ENCODE measurements at regions of chr3 and their contacts with region 1.

Region 1: GRCh38 chr3:177359593-177360357 is 162.5 kb upstream of the TBL1XR1 start:
- DNase-seq: peak; percentile 99

Region 2: GRCh38 chr3:176663837-176664831 is 695.6 kb before region 1 on chr3:
- intact Hi-C with region 1: no loop called
- DNase-seq: no peak

Region 3: DNA sequence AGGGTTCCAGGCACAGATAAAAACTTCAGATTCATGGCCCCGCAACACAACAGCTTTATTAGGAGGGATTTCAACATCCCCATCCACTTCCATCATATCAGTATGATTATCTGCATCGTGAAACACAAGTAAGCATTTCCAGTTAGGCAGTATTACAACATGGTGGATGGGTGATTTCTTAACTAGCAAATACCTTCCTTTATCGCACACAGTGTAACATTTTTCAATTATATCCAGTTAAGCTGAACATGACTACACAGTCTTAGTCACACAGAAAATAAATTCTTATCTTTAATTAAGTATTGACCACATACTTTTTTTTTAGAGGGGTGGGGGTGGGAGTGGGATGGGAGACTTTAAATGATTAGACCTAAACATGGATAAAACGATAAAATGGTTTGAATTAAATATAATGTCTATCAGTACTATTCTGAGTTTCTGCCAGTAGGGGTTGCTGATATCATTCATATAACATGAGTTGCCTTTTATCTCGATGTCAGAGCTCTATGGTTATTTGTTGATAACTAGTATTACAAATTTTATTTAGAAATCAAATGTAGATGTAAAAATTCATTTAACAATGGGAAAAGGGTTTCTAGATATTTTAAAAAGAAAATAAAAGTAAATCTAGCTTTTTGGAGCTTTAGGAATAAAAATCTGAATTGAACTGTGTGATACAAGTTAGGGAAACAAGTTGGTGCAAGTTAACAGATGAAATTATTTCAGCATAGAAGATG is 309.1 kb before region 1 on chr3:
- intact Hi-C with region 1: loop called in 1 of 2 experiments (anchors 10 kb)
- DNase-seq: no peak

Region 4: GRCh38 chr3:177197041-177197727 is 162.6 kb before region 1 on chr3 and contains the start of gene TBL1XR1:
- intact Hi-C with region 1: loop called (anchors 2 to 5 kb)
- DNase-seq: peak; percentile 97
- total RNA-seq, gene TBL1XR1: 126 to 146 TPM

Region 5: DNA sequence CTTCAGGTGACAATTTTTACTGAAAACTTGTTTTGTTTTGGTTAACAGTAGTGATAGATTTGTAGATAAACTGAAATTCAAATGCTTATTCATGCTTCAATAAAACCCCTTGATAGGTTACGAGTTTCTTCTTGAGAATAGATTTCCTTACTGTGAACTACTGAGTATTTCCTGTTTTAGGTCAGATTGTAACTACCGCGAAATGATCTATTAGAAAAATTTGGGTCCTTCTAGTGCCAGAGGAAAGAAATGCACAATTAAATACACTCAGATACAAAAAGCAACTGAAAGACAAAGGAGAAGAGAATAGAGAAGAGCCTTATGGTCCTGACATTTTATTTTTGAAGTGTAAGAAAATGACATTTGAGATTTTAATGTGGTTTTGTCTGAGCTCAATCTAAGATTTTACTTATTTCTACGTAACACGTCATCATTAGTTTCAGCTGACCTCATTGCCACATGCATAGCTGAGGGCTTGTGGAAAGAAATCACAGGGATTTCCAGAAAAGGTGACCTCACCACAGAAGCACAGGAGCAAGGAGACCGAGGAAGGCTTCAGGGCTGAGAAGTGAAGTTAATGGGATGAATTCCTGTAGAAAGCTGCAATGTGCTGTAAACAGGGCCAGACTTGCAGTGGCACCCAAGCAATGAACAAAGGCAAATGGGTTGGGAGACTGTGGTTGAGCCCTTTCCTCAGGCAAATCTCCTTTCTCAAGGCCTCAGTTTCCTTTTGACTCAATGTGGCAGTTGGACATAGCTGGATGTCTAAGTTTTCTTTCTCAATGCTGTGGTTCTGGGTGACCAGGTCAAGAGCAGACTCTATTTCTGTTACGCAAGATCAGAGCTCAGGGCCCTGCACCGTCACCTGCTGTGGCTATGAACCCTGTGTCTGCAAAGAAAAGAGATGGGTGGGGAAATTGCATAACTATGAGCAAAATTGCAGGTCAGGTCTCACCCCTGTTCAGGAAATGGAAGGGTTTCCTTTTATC is 89.5 kb after region 1 on chr3:
- intact Hi-C with region 1: loop called in 1 of 2 experiments (anchors 10 kb)
- DNase-seq: no peak

Region 6: DNA sequence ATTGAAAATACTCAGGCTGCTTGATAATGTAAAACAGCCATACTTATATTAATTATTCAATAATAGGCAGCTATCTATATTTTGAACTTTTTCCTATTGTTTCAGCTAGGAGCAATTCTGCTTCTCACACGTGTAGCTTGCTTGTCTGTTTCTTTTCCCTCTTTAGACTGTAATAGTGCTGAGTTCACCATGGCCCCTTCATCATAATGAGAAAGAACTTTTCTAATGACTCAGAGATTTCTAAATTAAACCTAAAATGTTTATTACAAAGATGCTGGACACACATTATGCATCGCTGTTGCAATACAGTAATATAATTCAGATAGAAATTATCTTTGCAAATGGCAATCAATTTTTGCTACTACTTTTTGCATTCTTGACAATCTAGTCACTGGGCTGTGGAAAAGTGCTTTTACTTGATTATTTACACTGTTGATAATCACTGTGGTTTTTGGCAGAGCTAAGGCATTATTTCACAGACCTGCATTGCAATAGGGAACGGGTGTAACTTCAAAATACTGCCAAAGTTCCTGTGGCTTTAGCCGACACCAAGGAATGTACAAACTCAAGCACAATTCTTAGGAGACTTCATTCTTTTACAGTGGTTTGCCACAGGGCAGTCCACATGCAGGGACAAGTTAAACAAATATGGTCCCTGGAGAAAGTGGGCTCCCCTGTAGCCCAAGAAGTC is 118.5 kb after region 1 on chr3:
- intact Hi-C with region 1: loop called in 1 of 2 experiments (anchors 10 kb)
- DNase-seq: no peak

Region 7: DNA sequence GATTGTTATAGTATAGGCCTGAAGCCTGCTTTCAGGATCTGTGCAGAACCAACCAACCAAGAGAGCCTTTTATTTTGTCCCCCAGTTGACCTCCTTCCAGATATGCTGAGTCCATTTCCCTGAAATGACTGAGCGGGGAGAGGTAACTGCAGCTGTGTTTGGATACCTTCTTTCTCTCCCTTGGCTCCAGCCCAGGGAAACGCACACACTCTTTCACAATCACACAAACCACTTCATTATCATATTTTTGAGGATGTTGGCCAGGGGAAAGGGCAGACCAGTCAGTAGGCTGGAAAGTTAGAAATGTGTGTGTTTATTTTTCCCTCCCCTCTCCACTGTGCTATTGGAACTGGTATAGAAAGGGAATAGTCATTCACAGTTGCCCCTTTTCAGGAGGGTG is 255.2 kb after region 1 on chr3:
- intact Hi-C with region 1: loop called in 1 of 2 experiments (anchors 10 kb)
- DNase-seq: peak; percentile 89

Region 8: DNA sequence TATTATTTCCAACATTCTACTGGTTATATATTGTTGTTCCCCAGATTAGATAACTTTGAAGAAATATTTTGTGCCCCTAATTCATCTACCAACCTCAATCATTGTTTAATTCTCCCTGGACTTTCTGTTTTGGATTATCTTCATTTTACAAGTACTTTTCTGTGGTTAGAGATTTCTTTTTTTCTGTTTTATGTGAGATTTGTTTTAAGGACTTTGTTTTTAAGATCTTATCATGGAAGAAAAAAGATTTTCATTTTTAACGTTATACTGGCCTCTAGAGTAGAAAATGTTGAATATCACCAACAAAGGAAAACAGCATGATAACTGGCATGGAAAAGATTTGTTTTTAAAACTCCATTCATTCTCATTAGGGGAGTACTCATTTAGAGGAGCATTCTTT is 965.6 kb after region 1 on chr3:
- intact Hi-C with region 1: loop called (anchors 10 kb)
- DNase-seq: no peak